GM18951 (cell line): ENCODE measurements at regions of chr1 and their contacts with region 1.

Region 1: GRCh38 chr1:17233675-17234074 is 15.2 kb upstream of the PADI3 start:
- POLR2A ChIP-seq: no peak

Region 2: GRCh38 chr1:17125756-17126237 is 107.9 kb before region 1 on chr1:
- in situ Hi-C with region 1: loop called (anchors 5 kb)
- POLR2A ChIP-seq: no peak

Region 3: GRCh38 chr1:17330856-17331255 is 97.2 kb after region 1 on chr1:
- in situ Hi-C with region 1: no loop called
- POLR2A ChIP-seq: no peak